Lower leg skin (tissue), 4 donors: ENCODE measurements at regions of chr3 and their contacts with region 1.

Region 1: DNA sequence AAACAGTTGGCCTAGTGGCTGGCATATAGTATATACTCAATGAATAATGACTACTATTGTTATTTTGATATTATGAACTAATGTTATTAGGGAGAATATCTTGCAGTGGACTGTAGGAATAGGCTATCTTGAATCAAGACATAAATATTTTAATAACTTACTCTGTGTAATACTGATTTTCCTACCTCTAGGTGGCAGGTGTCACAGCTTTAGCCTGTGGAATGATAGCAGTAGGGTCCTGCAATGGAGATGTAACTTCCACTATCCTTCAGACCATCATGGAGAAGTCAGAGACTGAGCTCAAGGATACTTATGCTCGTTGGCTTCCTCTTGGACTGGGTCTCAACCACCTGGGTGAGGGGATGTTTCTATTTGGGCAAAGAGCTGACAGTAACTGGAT is 6.5 kb downstream of the PSMD2 start:
- DNase-seq: no peak
- H3K4me3 ChIP-seq: no peak overlapping the region
- CTCF ChIP-seq: no peak
- POLR2A ChIP-seq: no peak

Region 2: GRCh38 chr3:184354121-184354728 is 48.6 kb after region 1 on chr3:
- intact Hi-C with region 1: loop called (anchors 10 kb)
- DNase-seq: peak in 1 of 2 donors; percentile 89
- H3K4me3 ChIP-seq: no peak overlapping the region
- CTCF ChIP-seq: no peak
- POLR2A ChIP-seq: no peak